ENCODE measurements at regions of chr6 and their contacts with region 1.

Region 1: GRCh38 chr6:79233611-79234149 is 802 bp downstream of the HMGN3 start:
- DNase-seq: peak; percentile 57 to 94
- H3K4me3 ChIP-seq: peak overlapping the region; percentile 81 to 85
- H3K27ac ChIP-seq: peak overlapping the region; percentile 76 to 88
- H3K4me1 ChIP-seq: peaks cover 0 to 5% of the 10 kb centered on the region in 2 donors
- H3K27me3 ChIP-seq: no peaks in the 10 kb centered on the region
- CTCF ChIP-seq: peak; percentile 15 to 34 (median 19)

Region 2: DNA sequence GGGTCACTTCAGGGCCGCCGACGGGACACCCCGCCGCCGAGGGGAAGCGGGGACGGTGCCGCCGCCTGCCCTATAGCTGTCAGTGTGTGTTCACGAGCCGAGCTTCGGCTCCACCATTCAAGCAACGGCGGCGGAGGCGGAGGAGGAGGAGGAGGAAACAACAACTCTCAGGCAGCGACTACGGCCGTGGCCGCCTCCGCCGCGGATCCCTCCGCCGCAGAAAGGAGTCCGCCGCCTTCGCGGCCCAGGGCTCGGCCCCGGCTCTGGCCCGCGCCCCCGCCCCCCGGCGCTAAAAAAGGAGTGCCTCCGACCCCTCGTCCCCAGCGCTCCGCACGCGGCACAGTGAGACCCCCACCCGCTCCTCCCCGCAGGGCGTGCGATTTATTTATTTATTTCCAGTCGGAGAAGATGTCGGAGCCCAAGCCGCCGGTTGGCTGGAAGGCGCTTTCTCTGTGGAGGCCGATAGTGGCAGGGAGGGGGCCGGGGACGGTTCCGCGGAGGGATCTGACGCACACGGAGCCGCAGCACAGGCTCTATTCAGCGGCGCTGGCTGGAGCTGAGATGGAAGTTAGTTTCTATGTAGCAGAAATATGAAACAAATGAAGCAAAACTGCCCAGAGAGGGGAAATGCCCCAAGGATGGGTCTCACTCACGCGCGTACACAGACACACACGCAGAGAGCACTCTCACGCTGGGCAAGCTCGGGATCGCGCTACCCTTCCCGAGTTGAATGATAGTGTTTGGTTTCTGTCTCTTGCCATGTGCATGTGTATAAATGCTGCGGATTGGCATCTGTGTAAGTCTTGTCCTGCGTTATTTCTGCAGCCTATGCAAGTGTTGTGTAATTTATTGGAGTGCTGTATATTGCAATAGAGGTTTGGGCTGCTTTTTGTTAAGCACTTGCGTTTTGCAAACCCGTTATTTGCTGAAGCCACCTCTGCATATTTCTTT is 155.3 kb before region 1 on chr6 and contains the start of gene PHIP:
- intact Hi-C with region 1: loop called (anchors 1 kb)
- DNase-seq: peak; percentile 73 to 96
- H3K4me3 ChIP-seq: peak within 1 kb of the TSS; percentile 88 to 100
- H3K27ac ChIP-seq: peak within 1 kb of the TSS; percentile 97 to 100
- H3K4me1 ChIP-seq: peaks cover 0 to 17% of the 10 kb centered on the region in 2 donors
- H3K27me3 ChIP-seq: no peaks in the 10 kb centered on the region
- CTCF ChIP-seq: no peak
- total RNA-seq, gene PHIP: 14.9 TPM

Region 3: DNA sequence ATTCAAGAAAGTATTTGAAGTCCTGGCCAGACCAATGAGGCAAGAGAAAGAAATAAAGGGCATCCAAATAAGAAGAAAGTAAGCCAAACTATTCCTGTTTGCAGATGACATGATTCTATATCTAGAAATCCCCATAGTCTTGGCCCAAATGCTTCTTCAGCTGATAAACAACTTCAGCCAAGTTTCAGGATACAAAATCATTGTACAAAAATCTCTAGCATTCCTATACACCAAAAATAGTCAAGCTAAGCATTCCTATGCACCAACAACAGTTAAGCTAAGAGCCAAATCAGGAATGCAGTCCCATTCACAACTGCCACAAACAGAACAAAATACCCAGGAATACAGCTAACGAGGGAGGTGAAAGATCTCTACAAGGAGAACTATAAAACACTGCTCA is 95.5 kb before region 1 on chr6:
- intact Hi-C with region 1: no loop called
- DNase-seq: no peak
- H3K4me3 ChIP-seq: no peak overlapping the region
- H3K27ac ChIP-seq: no peak overlapping the region
- H3K4me1 ChIP-seq: no peaks in the 10 kb centered on the region
- H3K27me3 ChIP-seq: no peaks in the 10 kb centered on the region
- CTCF ChIP-seq: no peak

Measured in ascending aorta (tissue), 2 donors.